ENCODE measurements at regions of chr22 and their contacts with region 1.

Region 1: GRCh38 chr22:24189249-24190158 is 8.2 kb downstream of the SUSD2 start:
- DNase-seq: peak; percentile 46 to 91
- H3K4me3 ChIP-seq: no peak overlapping the region
- H3K27ac ChIP-seq: no peak overlapping the region
- H3K4me1 ChIP-seq: peaks cover 0 to 7% (median 0%) of the 10 kb centered on the region in 4 experiments; a peak in 4 of 7 replicates
- H3K27me3 ChIP-seq: no peaks in the 10 kb centered on the region
- CTCF ChIP-seq: peak; percentile 96 to 98 (median 98)
- EP300 ChIP-seq: no peak
- POLR2A ChIP-seq: no peak
- RAD21 ChIP-seq: peak; percentile 99

Region 2: GRCh38 chr22:24095826-24096757 is 93.4 kb before region 1 on chr22:
- CTCF ChIA-PET with region 1: no interaction called
- POLR2A ChIA-PET with region 1: no interaction called
- DNase-seq: no peak
- H3K4me3 ChIP-seq: no peak overlapping the region
- H3K27ac ChIP-seq: no peak overlapping the region
- H3K4me1 ChIP-seq: no peaks in the 10 kb centered on the region
- H3K27me3 ChIP-seq: no peaks in the 10 kb centered on the region
- CTCF ChIP-seq: no peak
- EP300 ChIP-seq: no peak
- POLR2A ChIP-seq: no peak
- RAD21 ChIP-seq: no peak

Region 3: DNA sequence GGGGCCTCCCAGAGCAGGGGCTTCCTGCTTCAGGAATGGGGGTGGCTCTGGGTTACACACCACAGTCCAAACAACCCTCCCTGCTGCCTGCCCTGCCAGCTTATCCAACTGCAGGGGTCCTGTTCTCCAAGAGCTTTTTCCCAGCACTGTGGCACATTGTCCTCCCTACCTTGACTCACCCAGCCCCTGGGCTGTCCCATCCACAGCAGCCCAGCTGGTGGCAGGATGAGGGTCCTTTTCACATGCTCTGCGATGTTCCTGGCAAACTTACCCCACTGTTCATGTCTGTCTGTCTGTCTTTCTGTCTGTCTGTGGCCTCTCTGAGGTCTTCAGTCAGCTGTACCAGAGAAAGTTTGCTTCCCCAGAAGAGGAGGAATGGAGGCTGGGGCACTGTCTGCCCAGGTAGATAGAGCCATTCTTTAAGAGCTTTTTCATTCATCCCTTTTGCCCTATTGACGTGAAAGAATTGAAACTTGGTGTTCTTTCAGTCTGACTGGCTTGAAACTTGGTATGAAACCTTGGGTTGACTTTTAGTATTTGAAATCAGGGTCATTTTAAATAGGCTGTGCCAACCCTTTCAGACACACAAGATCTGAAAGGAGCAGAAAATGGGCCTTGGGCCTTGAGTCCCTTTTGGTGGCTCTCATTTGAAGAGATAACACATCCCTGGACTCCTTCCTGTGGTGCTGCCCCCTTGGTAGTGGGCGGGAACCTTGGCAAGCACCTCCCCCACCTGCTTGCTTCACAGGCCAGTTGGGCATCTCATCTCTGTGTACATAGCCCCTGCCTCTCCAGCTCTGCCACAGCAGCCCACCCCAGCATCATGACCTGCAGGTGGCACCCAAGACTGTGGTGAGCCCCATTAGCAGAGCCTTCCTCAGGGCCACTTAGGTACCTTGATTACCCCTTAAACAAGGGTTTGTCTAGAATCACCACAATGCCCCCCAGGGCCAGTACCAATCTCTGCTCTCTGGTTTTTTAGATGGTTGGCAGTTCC is 82.8 kb before region 1 on chr22:
- CTCF ChIA-PET with region 1: interaction called, 13 read pairs
- POLR2A ChIA-PET with region 1: no interaction called
- DNase-seq: peak in 1 of 2 experiments; percentile 49
- H3K4me3 ChIP-seq: no peak overlapping the region
- H3K27ac ChIP-seq: no peak overlapping the region
- H3K4me1 ChIP-seq: no peaks in the 10 kb centered on the region
- H3K27me3 ChIP-seq: no peaks in the 10 kb centered on the region
- CTCF ChIP-seq: peak; percentile 25 to 35 (median 28); a peak in 3 of 4 replicates
- EP300 ChIP-seq: no peak
- POLR2A ChIP-seq: no peak
- RAD21 ChIP-seq: peak; percentile 37 to 53; a peak in 3 of 4 replicates

Region 4: DNA sequence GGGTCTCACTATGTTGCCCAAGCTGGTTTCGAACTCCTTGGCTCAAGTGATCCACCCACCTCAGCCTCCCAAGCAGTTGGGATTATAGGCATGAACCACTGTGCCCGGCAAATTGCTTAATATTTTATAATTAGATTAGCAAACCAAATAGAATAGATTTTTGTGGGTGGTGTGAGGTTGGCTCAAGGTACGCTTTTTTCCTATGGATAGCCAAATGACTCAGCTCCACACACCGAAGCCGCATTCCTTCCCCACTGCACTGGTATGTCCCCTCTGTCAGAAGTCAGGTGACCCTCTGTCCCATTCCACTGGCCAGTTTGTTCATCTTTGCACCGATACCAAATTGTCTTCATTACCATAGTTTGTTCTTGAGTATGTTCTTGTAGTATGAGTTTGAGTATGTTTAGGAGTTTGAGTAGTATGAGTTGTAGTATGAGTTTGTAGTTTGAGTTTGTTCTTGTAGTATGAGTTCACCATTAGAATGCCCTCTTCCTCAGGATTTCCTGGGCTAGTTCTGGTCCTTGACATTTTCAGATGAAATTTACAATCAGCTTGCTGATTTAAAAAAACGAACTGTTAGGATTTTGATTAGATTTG is 11.2 kb after region 1 on chr22:
- CTCF ChIA-PET with region 1: interaction called, 37 read pairs
- POLR2A ChIA-PET with region 1: no interaction called
- DNase-seq: no peak
- H3K4me3 ChIP-seq: no peak overlapping the region
- H3K27ac ChIP-seq: no peak overlapping the region
- H3K4me1 ChIP-seq: no peaks in the 10 kb centered on the region
- H3K27me3 ChIP-seq: no peaks in the 10 kb centered on the region
- CTCF ChIP-seq: no peak
- EP300 ChIP-seq: no peak
- POLR2A ChIP-seq: no peak
- RAD21 ChIP-seq: no peak

Region 5: DNA sequence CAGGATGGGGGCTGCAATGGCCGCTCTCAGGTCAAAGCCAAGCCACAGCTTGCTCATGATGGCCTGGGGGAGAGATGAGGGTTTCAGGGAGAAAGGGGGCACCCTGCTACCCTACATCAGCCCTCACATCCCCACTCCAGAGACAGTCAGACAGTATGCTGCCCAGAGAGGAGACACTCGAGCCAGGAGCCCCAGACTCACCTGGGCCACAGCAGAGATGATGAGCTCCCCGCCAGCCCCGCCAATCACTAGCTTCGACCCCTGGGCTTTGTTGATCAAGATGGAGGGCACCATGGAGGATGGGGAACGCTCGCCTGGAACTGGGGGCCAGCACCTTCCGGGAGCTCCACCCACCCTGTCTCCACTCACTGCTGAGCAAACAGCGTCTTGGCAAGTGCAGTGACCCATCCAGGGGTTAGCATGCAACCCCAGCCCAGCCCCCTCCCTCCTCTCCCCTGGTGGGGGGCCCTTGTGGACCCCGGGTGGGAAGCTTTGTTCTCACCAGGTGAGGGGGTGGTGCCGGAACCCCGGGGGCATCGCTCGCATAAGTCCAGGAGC is 35.6 kb after region 1 on chr22:
- CTCF ChIA-PET with region 1: interaction called, 96 read pairs
- POLR2A ChIA-PET with region 1: no interaction called
- DNase-seq: no peak
- H3K4me3 ChIP-seq: no peak overlapping the region
- H3K27ac ChIP-seq: no peak overlapping the region
- H3K4me1 ChIP-seq: no peaks in the 10 kb centered on the region
- H3K27me3 ChIP-seq: no peaks in the 10 kb centered on the region
- CTCF ChIP-seq: no peak
- EP300 ChIP-seq: no peak
- POLR2A ChIP-seq: no peak
- RAD21 ChIP-seq: no peak

Region 6: GRCh38 chr22:24244101-24244787 is 54.7 kb after region 1 on chr22:
- CTCF ChIA-PET with region 1: interaction called, 29 read pairs
- POLR2A ChIA-PET with region 1: no interaction called
- DNase-seq: no peak
- H3K4me3 ChIP-seq: no peak overlapping the region
- H3K27ac ChIP-seq: no peak overlapping the region
- H3K4me1 ChIP-seq: peaks cover 0 to 3% (median 0%) of the 10 kb centered on the region in 4 experiments; a peak in 2 of 7 replicates
- H3K27me3 ChIP-seq: no peaks in the 10 kb centered on the region; a peak in 1 of 7 replicates
- CTCF ChIP-seq: no peak
- EP300 ChIP-seq: no peak
- POLR2A ChIP-seq: no peak
- RAD21 ChIP-seq: no peak

Measured in H1 (cell line).